ENCODE measurements at regions of chr18 and their contacts with region 1.

Region 1: DNA sequence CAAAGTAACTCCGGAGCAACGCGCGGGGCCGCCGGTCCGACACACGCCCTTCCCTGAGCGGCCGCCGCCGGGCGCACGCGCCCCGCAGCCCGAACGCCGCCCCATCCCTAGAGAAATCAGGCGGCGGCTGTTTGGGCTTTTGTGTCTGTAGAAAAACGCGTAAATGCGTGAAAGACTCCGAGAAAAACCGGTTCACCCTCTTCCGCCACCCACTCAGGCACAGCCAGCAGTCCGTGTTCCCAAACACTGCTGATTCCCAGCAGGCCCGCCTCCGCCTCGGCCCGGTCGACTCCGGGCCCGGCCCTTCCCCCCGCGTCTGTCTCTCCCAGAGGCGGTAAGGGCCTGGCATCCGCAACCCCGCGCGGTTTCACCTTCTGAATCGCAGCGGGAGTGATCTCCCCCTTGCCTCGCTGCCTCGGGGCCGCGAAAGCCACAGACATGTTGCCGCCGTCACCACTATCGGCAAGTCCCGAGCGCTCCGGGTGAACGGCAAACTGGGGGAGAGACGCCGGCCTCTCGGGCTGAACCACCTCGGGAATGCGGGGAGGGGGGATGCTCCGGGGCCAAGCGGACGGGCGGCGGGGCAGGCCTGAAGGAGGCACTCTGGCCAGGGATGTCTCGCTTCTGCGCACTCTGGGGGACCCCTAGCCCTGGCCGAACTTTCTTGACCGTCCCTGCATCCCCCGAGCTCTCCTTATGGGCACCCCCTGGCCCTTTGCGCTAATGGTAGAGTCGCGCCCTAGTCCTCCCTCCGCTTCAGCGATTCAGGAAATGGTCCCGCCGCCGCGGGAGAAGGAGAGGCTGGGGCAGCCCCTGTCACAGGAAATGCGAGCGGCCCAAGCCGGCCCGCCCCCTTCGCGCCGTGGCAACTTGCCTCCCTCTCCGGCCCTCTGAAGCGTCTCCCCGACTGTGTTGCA is at the start of gene SS18:
- DNase-seq: peak; percentile 89 to 93 (median 91)
- H3K4me3 ChIP-seq: peak within 1 kb of the TSS; percentile 80 to 97
- H3K4me3 Mint-ChIP-seq: peak within 1 kb of the TSS; percentile 92 to 99 (median 98)
- H3K27ac ChIP-seq: peak within 1 kb of the TSS; percentile 94
- H3K27ac Mint-ChIP-seq: peak within 1 kb of the TSS; percentile 95 to 99 (median 98)
- H3K4me1 ChIP-seq: peaks cover 39% of the 10 kb centered on the region
- H3K4me1 Mint-ChIP-seq: peaks cover 24 to 52% (median 30%) of the 10 kb centered on the region in 4 donors
- H3K27me3 ChIP-seq: no peaks in the 10 kb centered on the region
- H3K27me3 Mint-ChIP-seq: no peaks in the 10 kb centered on the region
- total RNA-seq, gene SS18: 78.7 to 79.3 TPM

Region 2: GRCh38 chr18:26003356-26003755 is 87.0 kb before region 1 on chr18:
- CTCF ChIA-PET with region 1: no interaction called
- POLR2A ChIA-PET with region 1: no interaction called
- intact Hi-C with region 1: no loop called
- DNase-seq: no peak
- H3K4me3 ChIP-seq: no peak overlapping the region
- H3K4me3 Mint-ChIP-seq: no peak overlapping the region
- H3K27ac ChIP-seq: no peak overlapping the region
- H3K27ac Mint-ChIP-seq: no peak overlapping the region
- H3K4me1 ChIP-seq: no peaks in the 10 kb centered on the region
- H3K4me1 Mint-ChIP-seq: peaks cover 0 to 5% (median under 1%) of the 10 kb centered on the region in 4 donors
- H3K27me3 ChIP-seq: no peaks in the 10 kb centered on the region
- H3K27me3 Mint-ChIP-seq: no peaks in the 10 kb centered on the region

Region 3: DNA sequence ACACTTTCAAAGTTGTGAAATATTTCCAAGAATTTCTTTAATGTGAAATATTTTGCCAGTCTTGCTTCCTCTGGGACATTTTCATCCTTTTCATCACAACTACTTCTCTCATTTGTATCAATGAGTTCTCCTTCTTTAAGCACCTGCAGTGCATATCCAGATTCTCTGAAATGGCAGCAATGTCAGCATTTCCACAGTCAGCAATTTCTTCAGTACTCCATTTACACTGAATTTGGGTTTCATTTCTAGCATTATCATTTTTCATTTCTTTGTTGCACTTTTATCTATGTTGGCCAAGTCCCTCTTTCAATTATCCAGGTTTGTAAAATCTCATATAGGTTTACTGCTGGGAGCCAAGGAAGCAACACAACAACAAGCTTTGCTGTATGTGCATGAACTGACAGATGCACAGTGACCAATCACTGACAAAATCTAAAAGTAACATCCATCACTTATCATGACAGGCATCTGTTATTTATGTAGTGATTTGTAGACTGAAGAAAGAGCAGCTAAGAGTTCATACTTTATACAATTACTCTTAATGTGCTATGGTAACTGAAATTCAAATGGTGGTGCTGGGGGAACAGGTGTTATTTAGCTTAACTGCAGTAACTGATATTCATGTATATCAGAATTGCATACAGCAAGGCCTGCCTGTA is 43.8 kb before region 1 on chr18:
- CTCF ChIA-PET with region 1: no interaction called
- POLR2A ChIA-PET with region 1: no interaction called
- intact Hi-C with region 1: loop called (anchors 5 kb)
- DNase-seq: no peak
- H3K4me3 ChIP-seq: no peak overlapping the region
- H3K4me3 Mint-ChIP-seq: no peak overlapping the region
- H3K27ac ChIP-seq: no peak overlapping the region
- H3K27ac Mint-ChIP-seq: peak overlapping the region in 4 of 7 donors; percentile 28 to 47 (median 38)
- H3K4me1 ChIP-seq: peaks cover 8% of the 10 kb centered on the region
- H3K4me1 Mint-ChIP-seq: peaks cover 12 to 33% (median 23%) of the 10 kb centered on the region in 4 donors
- H3K27me3 ChIP-seq: no peaks in the 10 kb centered on the region
- H3K27me3 Mint-ChIP-seq: no peaks in the 10 kb centered on the region

Region 4: GRCh38 chr18:26133652-26134051 is 43.3 kb after region 1 on chr18 and contains the start of gene PSMA8:
- CTCF ChIA-PET with region 1: no interaction called
- POLR2A ChIA-PET with region 1: interaction called, 7 read pairs
- intact Hi-C with region 1: loop called (anchors 1 kb)
- DNase-seq: peak; percentile 39 to 68 (median 56)
- H3K4me3 ChIP-seq: no peak within 1 kb of the TSS
- H3K4me3 Mint-ChIP-seq: peak within 1 kb of the TSS; percentile 75 to 88 (median 80)
- H3K27ac ChIP-seq: peak within 1 kb of the TSS; percentile 61
- H3K27ac Mint-ChIP-seq: peak within 1 kb of the TSS; percentile 35 to 94 (median 78)
- H3K4me1 ChIP-seq: no peaks in the 10 kb centered on the region
- H3K4me1 Mint-ChIP-seq: peaks cover 0 to 4% (median under 1%) of the 10 kb centered on the region in 4 donors
- H3K27me3 ChIP-seq: no peaks in the 10 kb centered on the region
- H3K27me3 Mint-ChIP-seq: no peaks in the 10 kb centered on the region
- total RNA-seq, gene PSMA8: 0.67 to 0.75 TPM

Region 5: GRCh38 chr18:26159353-26159752 is 69.0 kb after region 1 on chr18:
- CTCF ChIA-PET with region 1: no interaction called
- POLR2A ChIA-PET with region 1: no interaction called
- intact Hi-C with region 1: loop called (anchors 1 kb)
- DNase-seq: peak in 4 of 5 donors; percentile 9 to 18 (median 10)
- H3K4me3 ChIP-seq: no peak overlapping the region
- H3K4me3 Mint-ChIP-seq: no peak overlapping the region
- H3K27ac ChIP-seq: no peak overlapping the region
- H3K27ac Mint-ChIP-seq: no peak overlapping the region
- H3K4me1 ChIP-seq: no peaks in the 10 kb centered on the region
- H3K4me1 Mint-ChIP-seq: peaks cover 0 to 5% (median 0%) of the 10 kb centered on the region in 4 donors
- H3K27me3 ChIP-seq: no peaks in the 10 kb centered on the region
- H3K27me3 Mint-ChIP-seq: peaks cover 3% of the 10 kb centered on the region in 2 donors

Region 6: DNA sequence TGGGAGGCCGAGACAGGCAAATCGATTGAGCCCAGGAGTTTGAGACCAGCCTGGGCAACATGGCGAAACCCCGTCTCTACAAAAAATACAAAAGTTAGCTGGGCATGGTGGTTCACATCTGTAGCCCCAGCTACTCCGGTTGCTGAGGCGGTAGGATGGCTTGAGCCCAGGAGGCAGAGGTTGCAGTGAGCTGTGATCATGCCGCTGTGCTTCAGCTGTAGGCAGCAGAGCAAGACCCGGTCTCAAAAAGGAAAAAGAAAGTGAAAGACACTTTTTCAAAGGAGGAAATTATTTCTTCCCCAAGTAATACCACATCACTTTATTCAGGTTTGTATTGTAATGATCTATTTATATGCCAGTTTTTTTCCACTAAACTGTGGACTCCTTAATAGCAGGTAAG is 100.1 kb after region 1 on chr18:
- CTCF ChIA-PET with region 1: no interaction called
- POLR2A ChIA-PET with region 1: no interaction called
- intact Hi-C with region 1: loop called (anchors 1 kb)
- DNase-seq: peak in 4 of 5 donors; percentile 30 to 45 (median 38)
- H3K4me3 ChIP-seq: peak overlapping the region in 1 of 2 donors; percentile 44
- H3K4me3 Mint-ChIP-seq: peak overlapping the region; percentile 80 to 90 (median 86)
- H3K27ac ChIP-seq: peak overlapping the region; percentile 15
- H3K27ac Mint-ChIP-seq: peak overlapping the region; percentile 77 to 91 (median 85)
- H3K4me1 ChIP-seq: peaks cover 16% of the 10 kb centered on the region
- H3K4me1 Mint-ChIP-seq: peaks cover 9 to 23% (median 19%) of the 10 kb centered on the region in 4 donors
- H3K27me3 ChIP-seq: no peaks in the 10 kb centered on the region
- H3K27me3 Mint-ChIP-seq: no peaks in the 10 kb centered on the region

Region 7: DNA sequence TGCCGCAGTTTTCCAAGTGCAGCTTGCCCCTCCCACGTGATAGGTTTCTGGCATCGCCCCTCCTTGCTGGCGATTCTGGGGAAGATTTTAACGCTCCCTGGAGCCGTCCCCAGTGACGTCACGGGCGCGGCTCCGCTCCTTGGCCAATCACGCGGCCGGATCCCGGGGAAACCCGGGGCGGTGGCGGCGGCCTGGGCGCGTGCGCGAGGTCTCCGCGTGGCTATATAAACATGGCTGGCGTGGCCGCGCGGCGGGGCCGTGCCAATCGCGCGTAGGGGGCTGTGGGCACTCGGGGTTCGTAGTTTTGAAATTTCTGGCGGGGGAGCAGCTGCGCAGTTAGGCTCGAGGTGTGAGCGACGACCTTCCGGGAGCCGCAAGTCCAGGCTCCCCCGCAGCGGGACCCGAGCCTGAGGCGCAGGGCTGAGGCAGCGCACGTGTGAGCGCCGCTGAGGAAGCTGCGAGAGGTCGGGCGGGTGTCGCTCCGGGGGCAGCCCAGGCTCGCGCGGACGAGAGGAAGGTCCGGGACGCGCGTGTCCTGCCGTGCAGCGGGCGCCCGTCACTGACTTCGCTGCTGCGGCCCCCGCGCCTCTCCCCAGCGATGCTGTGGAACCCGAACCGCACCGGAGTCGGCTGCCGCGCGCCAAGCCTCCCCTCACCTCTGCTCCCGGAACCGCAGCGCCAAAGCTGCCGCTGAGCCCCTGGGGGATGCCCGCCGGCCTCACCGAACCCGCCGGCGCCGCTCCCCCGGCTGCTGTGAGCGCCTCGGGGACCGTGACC is 136.0 kb after region 1 on chr18 and contains the start of gene TAF4B:
- CTCF ChIA-PET with region 1: no interaction called
- POLR2A ChIA-PET with region 1: interaction called, 16 read pairs
- intact Hi-C with region 1: loop called (anchors 1 kb)
- DNase-seq: peak; percentile 89 to 93 (median 90)
- H3K4me3 ChIP-seq: peak within 1 kb of the TSS; percentile 13 to 71
- H3K4me3 Mint-ChIP-seq: peak within 1 kb of the TSS; percentile 91 to 97 (median 95)
- H3K27ac ChIP-seq: peak within 1 kb of the TSS; percentile 80
- H3K27ac Mint-ChIP-seq: peak within 1 kb of the TSS; percentile 91 to 98 (median 98)
- H3K4me1 ChIP-seq: peaks cover 28% of the 10 kb centered on the region
- H3K4me1 Mint-ChIP-seq: peaks cover 19 to 42% (median 26%) of the 10 kb centered on the region in 4 donors
- H3K27me3 ChIP-seq: no peaks in the 10 kb centered on the region
- H3K27me3 Mint-ChIP-seq: no peaks in the 10 kb centered on the region
- total RNA-seq, gene TAF4B: 7.2 to 8.1 TPM

Region 8: GRCh38 chr18:26548429-26549262 is 458.3 kb after region 1 on chr18 and contains the start of gene KCTD1:
- CTCF ChIA-PET with region 1: no interaction called
- POLR2A ChIA-PET with region 1: no interaction called
- intact Hi-C with region 1: loop called (anchors 5 kb)
- DNase-seq: peak; percentile 55 to 72 (median 68)
- H3K4me3 ChIP-seq: peak within 1 kb of the TSS in 1 of 2 donors; percentile 42
- H3K4me3 Mint-ChIP-seq: peak within 1 kb of the TSS; percentile 85 to 92 (median 88)
- H3K27ac ChIP-seq: no peak within 1 kb of the TSS
- H3K27ac Mint-ChIP-seq: peak within 1 kb of the TSS in 3 of 7 donors; percentile 22 to 68 (median 64)
- H3K4me1 ChIP-seq: peaks cover 44% of the 10 kb centered on the region
- H3K4me1 Mint-ChIP-seq: peaks cover 17 to 52% (median 32%) of the 10 kb centered on the region in 4 donors
- H3K27me3 ChIP-seq: peaks cover 16% of the 10 kb centered on the region
- H3K27me3 Mint-ChIP-seq: peaks cover 20 to 26% of the 10 kb centered on the region in 2 donors
- total RNA-seq, gene KCTD1: 2.8 to 3.4 TPM

Measured in CD4-positive, alpha-beta memory T cell (primary cell).